ENCODE measurements at regions of chr7 and their contacts with region 1.

Region 1: DNA sequence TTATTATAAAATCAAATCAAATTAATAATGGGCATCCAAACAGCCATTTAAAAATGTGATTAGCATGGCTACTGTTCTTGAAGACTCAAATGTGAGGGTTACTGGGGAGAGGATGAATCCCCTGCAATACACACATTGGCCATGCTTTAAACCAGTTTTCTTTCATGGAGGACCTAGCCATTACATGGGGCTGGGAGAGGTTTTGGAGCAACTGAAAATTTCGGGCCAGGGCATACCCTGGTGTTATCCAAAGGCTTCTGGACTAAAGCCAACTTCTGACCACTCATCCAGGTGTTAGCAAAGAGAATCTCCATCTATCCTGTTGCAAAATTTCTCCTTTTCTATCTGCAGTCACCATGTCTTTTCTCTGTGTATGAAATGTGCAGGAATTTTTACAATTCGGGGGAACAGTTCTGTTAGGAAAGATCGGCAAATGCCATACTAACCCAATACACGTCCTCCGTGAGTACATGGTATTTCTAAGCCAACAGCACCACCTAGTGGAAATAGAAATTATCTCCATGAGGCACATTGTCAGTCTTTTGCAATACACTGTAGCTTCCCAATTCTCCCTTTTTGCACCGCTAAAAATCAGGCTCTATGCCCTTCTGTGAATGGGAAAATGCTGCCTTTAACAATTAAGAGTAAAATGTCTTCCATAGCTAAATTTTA is 47.0 kb upstream of the ZNF107 start:
- DNase-seq: peak; percentile 60 to 76 (median 68)
- H3K4me3 ChIP-seq: no peak overlapping the region
- H3K27ac ChIP-seq: no peak overlapping the region
- H3K4me1 ChIP-seq: no peaks in the 10 kb centered on the region
- H3K27me3 ChIP-seq: no peaks in the 10 kb centered on the region

Region 2: DNA sequence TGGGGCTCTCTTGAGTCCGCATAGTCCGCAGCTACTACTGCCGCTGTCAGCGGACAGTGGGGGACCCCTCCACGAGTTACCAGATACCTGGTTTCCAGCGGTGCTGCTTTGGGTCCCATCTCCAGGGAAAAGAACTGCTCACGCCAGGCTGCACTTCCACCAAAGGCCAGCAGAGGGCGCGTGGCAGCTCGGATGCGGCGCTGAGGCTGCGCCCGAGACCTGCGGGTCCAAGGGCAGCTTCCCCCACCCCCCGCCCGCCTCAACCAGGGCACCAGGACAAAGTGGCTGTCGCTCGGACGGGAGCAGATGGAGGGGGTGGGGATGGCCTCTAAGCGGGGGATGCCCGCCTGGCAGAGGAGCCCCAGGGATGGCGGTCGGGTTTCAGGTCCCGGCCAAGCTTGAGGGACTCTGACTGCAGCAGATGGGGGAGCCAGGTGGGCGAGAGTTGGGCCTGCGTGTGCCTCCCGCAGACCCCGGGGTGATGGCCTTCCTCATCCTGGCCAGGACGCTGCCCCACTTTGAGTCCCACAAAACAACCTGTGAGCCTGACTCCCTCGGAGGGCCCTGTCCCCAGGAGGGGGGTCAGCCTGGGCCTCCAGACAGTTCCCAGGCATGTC is 435.7 kb before region 1 on chr7:
- CTCF ChIA-PET with region 1: interaction called, 22 read pairs
- POLR2A ChIA-PET with region 1: no interaction called
- DNase-seq: peak; percentile 6 to 38 (median 35)
- H3K4me3 ChIP-seq: no peak overlapping the region
- H3K27ac ChIP-seq: no peak overlapping the region
- H3K4me1 ChIP-seq: no peaks in the 10 kb centered on the region
- H3K27me3 ChIP-seq: peaks cover 0 to 17% (median 0%) of the 10 kb centered on the region in 5 experiments

Region 3: GRCh38 chr7:64602518-64602917 is 16.4 kb before region 1 on chr7:
- CTCF ChIA-PET with region 1: no interaction called
- POLR2A ChIA-PET with region 1: no interaction called
- DNase-seq: no peak
- H3K4me3 ChIP-seq: no peak overlapping the region
- H3K27ac ChIP-seq: no peak overlapping the region
- H3K4me1 ChIP-seq: no peaks in the 10 kb centered on the region
- H3K27me3 ChIP-seq: no peaks in the 10 kb centered on the region

Region 4: GRCh38 chr7:64787295-64787694 is 168.4 kb after region 1 on chr7:
- CTCF ChIA-PET with region 1: no interaction called
- POLR2A ChIA-PET with region 1: no interaction called
- DNase-seq: no peak
- H3K4me3 ChIP-seq: no peak overlapping the region
- H3K27ac ChIP-seq: no peak overlapping the region
- H3K4me1 ChIP-seq: no peaks in the 10 kb centered on the region
- H3K27me3 ChIP-seq: no peaks in the 10 kb centered on the region

Region 5: GRCh38 chr7:65216459-65216858 is 597.5 kb after region 1 on chr7:
- CTCF ChIA-PET with region 1: no interaction called
- POLR2A ChIA-PET with region 1: no interaction called
- DNase-seq: peak; percentile 54 to 71 (median 70)
- H3K4me3 ChIP-seq: no peak overlapping the region
- H3K27ac ChIP-seq: no peak overlapping the region
- H3K4me1 ChIP-seq: no peaks in the 10 kb centered on the region
- H3K27me3 ChIP-seq: no peaks in the 10 kb centered on the region

Measured in common myeloid progenitor, CD34-positive (primary cell).